ENCODE measurements at regions of chrX and their contacts with region 1.

Region 1: DNA sequence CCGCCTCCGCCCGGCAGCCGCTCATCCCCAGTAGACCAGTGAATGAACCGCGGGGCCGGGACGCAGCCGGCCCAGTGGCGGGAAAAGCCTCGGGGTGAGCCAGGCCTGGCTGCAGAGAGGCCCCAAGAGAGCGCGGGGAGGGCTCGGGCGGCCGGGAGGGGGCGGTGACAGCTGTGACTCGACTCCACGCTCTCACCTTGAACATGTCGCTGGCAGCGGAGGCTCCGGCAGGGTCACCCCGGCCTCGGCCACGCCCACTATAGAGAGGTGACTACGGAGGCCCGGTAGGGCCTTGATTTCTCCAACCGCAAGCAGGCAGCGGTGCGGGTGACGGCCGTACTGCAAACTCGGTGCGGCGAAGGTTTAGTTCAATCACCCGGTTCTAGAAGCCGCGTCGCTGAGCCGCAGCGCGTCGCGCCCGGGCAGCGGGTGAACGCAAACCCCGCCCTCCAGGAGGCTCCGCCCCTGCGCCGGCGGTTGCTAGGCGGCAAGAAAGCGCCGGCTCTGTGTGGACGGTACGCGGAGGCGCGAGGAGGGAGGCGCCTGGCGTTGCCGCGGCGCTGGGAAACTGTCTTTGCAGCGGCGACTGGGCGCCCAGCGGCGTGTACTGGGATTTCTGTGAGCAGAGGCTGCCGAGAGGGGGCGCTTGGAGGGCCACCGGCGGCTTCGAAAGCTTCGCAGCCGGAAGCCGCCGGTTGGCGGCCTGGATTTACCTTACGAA is at the starts of genes APOO and CXorf58:
- DNase-seq: peak; percentile 92
- H3K4me3 ChIP-seq: peak within 1 kb of the TSS; percentile 35 to 67 (median 53)
- H3K27ac ChIP-seq: peak within 1 kb of the TSS; percentile 82 to 96 (median 92)
- H3K4me1 ChIP-seq: peaks cover 0 to 10% (median 0%) of the 10 kb centered on the region in 4 donors
- H3K27me3 ChIP-seq: no peaks in the 10 kb centered on the region
- CTCF ChIP-seq: peak; percentile 68 to 95 (median 75)
- EP300 ChIP-seq: no peak
- POLR2A ChIP-seq: peak; percentile 65
- total RNA-seq, gene APOO: 10.0 to 24.5 (median 15.6) TPM in 3 of 4 donors, not detected in the other
- total RNA-seq, gene CXorf58: 0.27 TPM in 1 of 4 donors, not detected in the others

Region 2: DNA sequence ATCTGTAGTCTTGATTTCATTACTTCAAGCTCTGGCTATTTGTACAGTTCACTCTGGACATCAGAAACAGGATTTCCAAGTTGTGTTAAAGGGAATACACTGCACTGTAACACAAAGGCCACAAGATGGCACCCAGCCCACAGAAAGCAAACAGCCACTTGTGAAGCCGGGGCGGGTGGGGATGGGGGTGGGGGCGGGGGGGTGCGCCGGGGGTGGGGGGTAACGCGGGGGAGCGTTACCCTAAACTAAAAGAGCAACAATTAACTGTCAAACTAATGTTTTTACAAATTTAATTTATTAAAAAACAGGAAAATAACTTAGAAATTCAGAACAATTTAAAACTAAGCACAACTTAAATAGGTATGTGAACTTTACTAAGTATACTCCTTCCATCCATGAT is 213.1 kb before region 1 on chrX:
- in situ Hi-C with region 1: loop called (anchors 5 to 25 kb)
- intact Hi-C with region 1: loop called (anchors 10 kb)
- DNase-seq: peak; percentile 55
- H3K4me3 ChIP-seq: no peak overlapping the region
- H3K27ac ChIP-seq: no peak overlapping the region
- H3K4me1 ChIP-seq: no peaks in the 10 kb centered on the region
- H3K27me3 ChIP-seq: no peaks in the 10 kb centered on the region
- CTCF ChIP-seq: peak in 4 of 5 experiments; percentile 21 to 57 (median 40)
- EP300 ChIP-seq: no peak
- POLR2A ChIP-seq: no peak

Region 3: GRCh38 chrX:23756157-23756559 is 151.5 kb before region 1 on chrX:
- in situ Hi-C with region 1: loop called in 1 of 4 experiments (anchors 25 kb)
- intact Hi-C with region 1: no loop called
- DNase-seq: peak; percentile 70
- H3K4me3 ChIP-seq: no peak overlapping the region
- H3K27ac ChIP-seq: no peak overlapping the region
- H3K4me1 ChIP-seq: no peaks in the 10 kb centered on the region
- H3K27me3 ChIP-seq: no peaks in the 10 kb centered on the region
- CTCF ChIP-seq: peak; percentile 45 to 55 (median 50)
- EP300 ChIP-seq: no peak
- POLR2A ChIP-seq: no peak

Region 4: GRCh38 chrX:23782863-23783568 is 124.6 kb before region 1 on chrX and contains the start of gene SAT1:
- in situ Hi-C with region 1: loop called in 2 of 4 experiments (anchors 5 to 10 kb)
- intact Hi-C with region 1: loop called (anchors 2 kb)
- DNase-seq: peak; percentile 96
- H3K4me3 ChIP-seq: peak within 1 kb of the TSS; percentile 48 to 81 (median 76)
- H3K27ac ChIP-seq: peak within 1 kb of the TSS; percentile 83 to 97 (median 97)
- H3K4me1 ChIP-seq: peaks cover 0 to 15% (median 0%) of the 10 kb centered on the region in 4 donors
- H3K27me3 ChIP-seq: no peaks in the 10 kb centered on the region
- CTCF ChIP-seq: peak; percentile 68 to 89 (median 74)
- EP300 ChIP-seq: no peak
- POLR2A ChIP-seq: peak; percentile 99
- total RNA-seq, gene SAT1: 313 to 1,184 (median 689) TPM

Region 5: DNA sequence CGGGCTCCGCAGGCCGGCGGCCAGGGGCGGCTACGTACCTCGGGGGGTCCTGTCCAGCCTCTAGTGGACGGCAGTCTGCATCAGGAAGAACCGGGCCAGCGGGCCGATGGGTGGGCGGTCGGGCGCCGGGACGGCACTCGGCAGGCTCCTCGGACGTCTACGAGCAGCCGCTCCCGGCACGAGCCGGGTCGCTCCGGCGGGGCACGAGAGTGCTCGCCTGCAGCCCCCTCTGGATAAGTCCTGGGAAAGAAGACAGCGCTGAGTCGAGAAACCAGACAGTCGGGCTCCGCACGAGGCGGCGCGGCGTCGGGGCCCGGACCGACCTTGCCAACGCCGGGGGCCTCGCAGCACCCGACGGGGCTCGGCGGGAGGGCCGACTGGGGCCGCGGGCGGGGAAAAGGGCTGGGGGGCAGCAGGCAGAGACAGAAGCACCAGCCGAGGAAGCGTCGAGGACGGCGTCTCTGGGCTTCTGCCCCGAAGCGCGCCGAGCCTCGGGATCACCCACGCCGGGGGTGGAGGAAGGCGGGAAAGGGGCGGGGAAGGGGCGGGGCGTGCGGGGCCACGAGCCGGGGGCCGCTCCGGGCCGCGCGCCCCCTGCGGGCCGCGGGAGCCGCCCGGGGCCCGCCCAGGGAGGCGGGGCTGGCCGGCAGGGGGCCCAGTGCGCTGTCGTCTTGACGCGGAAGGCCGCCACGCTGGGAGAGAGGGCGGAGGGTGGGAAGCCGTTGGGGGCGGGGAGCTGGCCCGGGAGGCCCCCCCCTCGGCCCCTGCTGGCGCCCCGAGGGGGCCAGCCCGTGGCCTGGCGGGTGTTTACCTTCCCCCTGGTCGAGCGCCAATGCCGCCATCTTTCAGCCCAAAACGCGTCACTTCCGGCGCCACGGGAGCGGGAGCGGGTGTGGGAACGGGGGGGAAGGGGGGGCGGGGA is 117.4 kb after region 1 on chrX:
- in situ Hi-C with region 1: loop called in 2 of 4 experiments (anchors 10 to 25 kb)
- intact Hi-C with region 1: no loop called
- DNase-seq: peak; percentile 86
- H3K4me3 ChIP-seq: peak overlapping the region; percentile 60 to 95 (median 80)
- H3K27ac ChIP-seq: peak overlapping the region; percentile 93 to 98 (median 97)
- H3K4me1 ChIP-seq: peaks cover 0 to 3% (median 0%) of the 10 kb centered on the region in 4 donors
- H3K27me3 ChIP-seq: no peaks in the 10 kb centered on the region
- CTCF ChIP-seq: peak in 1 of 5 experiments; percentile 7
- EP300 ChIP-seq: no peak
- POLR2A ChIP-seq: peak; percentile 78

Region 6: GRCh38 chrX:24054182-24055042 is 146.8 kb after region 1 on chrX and contains the start of gene EIF2S3:
- in situ Hi-C with region 1: loop called in 2 of 4 experiments (anchors 25 kb)
- intact Hi-C with region 1: no loop called
- DNase-seq: peak; percentile 91
- H3K4me3 ChIP-seq: peak within 1 kb of the TSS in 2 of 4 donors; percentile 70 to 80
- H3K27ac ChIP-seq: peak within 1 kb of the TSS in 2 of 4 donors; percentile 89 to 92
- H3K4me1 ChIP-seq: peaks cover 0 to 6% (median 0%) of the 10 kb centered on the region in 4 donors
- H3K27me3 ChIP-seq: no peaks in the 10 kb centered on the region
- CTCF ChIP-seq: peak; percentile 49 to 69 (median 58)
- EP300 ChIP-seq: no peak
- POLR2A ChIP-seq: peak; percentile 78
- total RNA-seq, gene EIF2S3: 50.5 to 129 (median 80.5) TPM

Measured in transverse colon (tissue), 4 donors.